Sigmoid colon (tissue), 7 donors: ENCODE measurements at regions of chr6 and their contacts with region 1.

Region 1: GRCh38 chr6:1389369-1390132 is at the start of gene FOXF2:
- DNase-seq: peak; percentile 85
- H3K4me3 ChIP-seq: peak within 1 kb of the TSS; percentile 57 to 68 (median 64)
- H3K27ac ChIP-seq: peak within 1 kb of the TSS; percentile 84 to 96 (median 89)
- H3K4me1 ChIP-seq: peaks cover 0 to 29% (median 22%) of the 10 kb centered on the region in 4 donors
- H3K27me3 ChIP-seq: peaks cover 12 to 87% (median 38%) of the 10 kb centered on the region in 3 donors
- CTCF ChIP-seq: no peak
- EP300 ChIP-seq: no peak
- POLR2A ChIP-seq: no peak
- total RNA-seq, gene FOXF2: 18.2 to 37.8 (median 27.3) TPM

Region 2: DNA sequence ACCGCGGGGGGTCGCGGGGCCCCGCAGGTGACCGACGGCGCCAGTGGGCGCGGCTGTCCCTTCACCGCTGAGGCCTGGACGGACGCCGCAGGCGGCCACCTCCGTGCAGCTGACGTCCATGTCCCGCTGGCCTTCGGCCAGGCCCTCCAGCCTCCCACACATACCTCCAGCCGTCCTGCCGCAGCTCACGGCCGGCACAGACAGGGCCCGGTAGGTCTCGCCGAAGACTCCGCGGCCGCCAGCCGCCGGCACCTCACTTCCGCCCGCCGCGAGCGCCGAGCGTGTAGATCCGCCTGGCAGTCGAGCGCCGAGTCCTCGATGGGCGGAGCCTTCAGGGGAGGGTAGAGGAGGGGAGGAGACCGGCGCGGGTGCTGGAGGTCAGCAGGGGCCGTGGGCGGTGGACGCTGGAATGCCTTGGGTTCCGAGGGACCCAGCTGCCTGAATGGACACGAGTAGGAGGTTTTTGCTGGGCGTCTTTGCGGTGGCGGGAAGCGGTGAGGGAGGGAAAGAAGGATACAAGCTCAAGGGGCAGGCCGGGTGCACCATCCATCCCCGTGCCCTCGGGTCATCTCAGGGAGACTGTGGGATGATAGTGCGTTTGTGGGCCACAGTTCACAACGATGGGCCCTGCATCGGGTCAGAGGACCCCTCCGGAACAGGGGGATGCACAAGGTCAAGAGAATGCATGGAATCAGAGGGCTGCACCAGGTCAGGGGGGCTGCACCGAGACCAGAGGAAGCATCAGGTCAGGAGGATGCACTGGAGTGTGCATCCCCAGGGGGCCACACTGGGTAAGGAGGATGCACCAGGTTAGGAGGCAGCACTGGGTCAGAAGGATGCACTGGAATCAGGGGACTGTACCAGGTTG is 696.5 kb before region 1 on chr6 and contains the start of gene EXOC2:
- intact Hi-C with region 1: loop called (anchors 5 kb)
- DNase-seq: peak; percentile 91
- H3K4me3 ChIP-seq: peak within 1 kb of the TSS; percentile 80 to 98 (median 90)
- H3K27ac ChIP-seq: peak within 1 kb of the TSS; percentile 81 to 90 (median 86)
- H3K4me1 ChIP-seq: peaks cover 0 to 28% (median 23%) of the 10 kb centered on the region in 4 donors
- H3K27me3 ChIP-seq: no peaks in the 10 kb centered on the region
- CTCF ChIP-seq: no peak
- EP300 ChIP-seq: no peak
- POLR2A ChIP-seq: peak; percentile 38 to 42
- total RNA-seq, gene EXOC2: 15.3 to 23.2 (median 19.1) TPM

Region 3: DNA sequence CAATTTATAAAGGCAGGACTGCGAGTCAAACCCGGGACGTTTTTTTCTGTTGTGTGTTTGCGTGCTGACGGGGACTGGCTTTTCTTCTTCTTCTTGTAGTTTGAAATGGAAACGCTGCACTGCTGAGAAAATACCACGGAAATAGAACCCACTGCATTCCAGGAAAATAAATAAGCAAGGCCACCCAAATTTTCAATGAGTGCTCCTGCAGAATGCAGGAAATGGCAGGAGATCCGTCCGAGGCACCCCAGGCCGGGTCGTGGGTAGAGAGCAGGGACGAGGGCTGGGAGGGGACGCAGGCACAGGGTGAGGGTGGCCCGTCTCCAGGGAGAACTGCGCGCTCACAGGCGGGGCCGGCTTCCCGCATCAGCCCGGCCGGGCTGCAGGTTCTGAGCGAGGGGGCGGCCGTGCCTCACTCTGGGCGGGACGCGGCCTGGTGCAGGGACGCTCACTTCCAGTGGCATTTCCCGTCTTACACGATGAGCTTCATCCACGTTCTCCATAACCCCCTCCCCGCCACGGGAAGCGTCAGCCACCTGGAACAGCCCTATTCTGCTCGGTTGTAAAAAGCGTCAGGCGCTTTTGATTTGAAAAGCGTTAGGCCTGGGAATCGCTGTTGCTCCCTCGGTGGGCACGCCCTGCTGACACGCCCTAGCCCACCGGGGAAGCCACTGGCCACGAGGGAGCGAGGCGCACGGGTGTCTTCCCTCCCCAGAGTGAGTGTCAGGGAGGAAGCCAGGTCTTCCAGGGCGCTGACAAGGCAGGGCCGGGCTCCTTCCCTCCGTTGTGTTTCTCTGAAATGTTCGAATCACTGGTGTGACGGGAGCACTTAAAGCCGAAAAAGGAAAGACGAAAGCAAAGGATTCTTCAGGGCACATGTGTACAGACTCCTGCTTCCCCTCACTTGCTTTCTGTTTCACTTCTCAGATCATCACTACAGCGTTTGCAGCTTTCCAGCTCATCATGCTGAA is 678.7 kb before region 1 on chr6:
- intact Hi-C with region 1: loop called (anchors 5 kb)
- DNase-seq: peak; percentile 81
- H3K4me3 ChIP-seq: peak overlapping the region; percentile 50 to 83 (median 61)
- H3K27ac ChIP-seq: peak overlapping the region; percentile 91 to 97 (median 94)
- H3K4me1 ChIP-seq: peaks cover 0 to 10% (median 7%) of the 10 kb centered on the region in 4 donors
- H3K27me3 ChIP-seq: no peaks in the 10 kb centered on the region
- CTCF ChIP-seq: no peak
- EP300 ChIP-seq: peak in 1 of 4 donors; percentile 16
- POLR2A ChIP-seq: peak; percentile 56 to 58